Endothelial cell of umbilical vein (primary cell): ENCODE measurements at regions of chr12 and their contacts with region 1.

Region 1: GRCh38 chr12:79373896-79374499 is 316.8 kb downstream of the PAWR start:
- DNase-seq: peak; percentile 58
- H3K4me3 ChIP-seq: no peak overlapping the region
- H3K27ac ChIP-seq: no peak overlapping the region
- H3K4me1 ChIP-seq: peaks cover 4% of the 10 kb centered on the region
- H3K27me3 ChIP-seq: no peaks in the 10 kb centered on the region
- CTCF ChIP-seq: peak; percentile 84 to 87
- POLR2A ChIP-seq: no peak

Region 2: DNA sequence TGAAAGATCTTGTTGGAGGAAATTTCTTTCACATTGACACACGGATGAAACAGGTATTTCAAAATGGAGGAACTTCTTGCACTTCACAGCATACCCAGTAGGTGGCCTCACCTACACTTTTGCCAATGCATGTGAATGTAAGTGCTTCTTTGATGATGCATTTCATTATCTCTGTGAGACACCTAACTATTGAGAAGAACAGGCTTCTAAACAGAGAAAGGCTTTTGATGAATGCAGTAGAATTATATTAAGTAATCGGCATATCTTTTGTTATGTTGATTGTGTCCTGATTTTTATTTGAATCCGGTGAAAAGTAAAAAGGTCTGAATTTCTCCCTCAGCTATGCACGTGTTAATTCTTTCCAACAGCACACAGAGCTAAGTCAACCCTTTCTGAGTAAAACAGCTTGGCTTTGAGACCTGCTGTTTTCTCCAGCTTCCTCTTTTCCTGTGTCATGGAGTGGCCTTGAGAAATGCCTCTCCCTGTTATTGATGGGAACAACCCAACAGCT is 1144.4 kb before region 1 on chr12:
- CTCF ChIA-PET with region 1: interaction called, 3 read pairs
- POLR2A ChIA-PET with region 1: no interaction called
- dilution Hi-C with region 1: no loop called
- intact Hi-C with region 1: loop called (anchors 2 kb)
- DNase-seq: peak; percentile 47
- H3K4me3 ChIP-seq: no peak overlapping the region
- H3K27ac ChIP-seq: no peak overlapping the region
- H3K4me1 ChIP-seq: no peaks in the 10 kb centered on the region
- H3K27me3 ChIP-seq: no peaks in the 10 kb centered on the region
- CTCF ChIP-seq: peak; percentile 56 to 67
- POLR2A ChIP-seq: no peak

Region 3: GRCh38 chr12:78470354-78471195 is 903.4 kb before region 1 on chr12:
- CTCF ChIA-PET with region 1: interaction called, 57 read pairs
- POLR2A ChIA-PET with region 1: no interaction called
- dilution Hi-C with region 1: no loop called
- intact Hi-C with region 1: loop called (anchors 1 kb)
- DNase-seq: peak; percentile 57
- H3K4me3 ChIP-seq: no peak overlapping the region
- H3K27ac ChIP-seq: no peak overlapping the region
- H3K4me1 ChIP-seq: no peaks in the 10 kb centered on the region
- H3K27me3 ChIP-seq: peaks cover 0 to 10% of the 10 kb centered on the region in 2 experiments
- CTCF ChIP-seq: peak; percentile 47 to 72
- POLR2A ChIP-seq: no peak

Region 4: DNA sequence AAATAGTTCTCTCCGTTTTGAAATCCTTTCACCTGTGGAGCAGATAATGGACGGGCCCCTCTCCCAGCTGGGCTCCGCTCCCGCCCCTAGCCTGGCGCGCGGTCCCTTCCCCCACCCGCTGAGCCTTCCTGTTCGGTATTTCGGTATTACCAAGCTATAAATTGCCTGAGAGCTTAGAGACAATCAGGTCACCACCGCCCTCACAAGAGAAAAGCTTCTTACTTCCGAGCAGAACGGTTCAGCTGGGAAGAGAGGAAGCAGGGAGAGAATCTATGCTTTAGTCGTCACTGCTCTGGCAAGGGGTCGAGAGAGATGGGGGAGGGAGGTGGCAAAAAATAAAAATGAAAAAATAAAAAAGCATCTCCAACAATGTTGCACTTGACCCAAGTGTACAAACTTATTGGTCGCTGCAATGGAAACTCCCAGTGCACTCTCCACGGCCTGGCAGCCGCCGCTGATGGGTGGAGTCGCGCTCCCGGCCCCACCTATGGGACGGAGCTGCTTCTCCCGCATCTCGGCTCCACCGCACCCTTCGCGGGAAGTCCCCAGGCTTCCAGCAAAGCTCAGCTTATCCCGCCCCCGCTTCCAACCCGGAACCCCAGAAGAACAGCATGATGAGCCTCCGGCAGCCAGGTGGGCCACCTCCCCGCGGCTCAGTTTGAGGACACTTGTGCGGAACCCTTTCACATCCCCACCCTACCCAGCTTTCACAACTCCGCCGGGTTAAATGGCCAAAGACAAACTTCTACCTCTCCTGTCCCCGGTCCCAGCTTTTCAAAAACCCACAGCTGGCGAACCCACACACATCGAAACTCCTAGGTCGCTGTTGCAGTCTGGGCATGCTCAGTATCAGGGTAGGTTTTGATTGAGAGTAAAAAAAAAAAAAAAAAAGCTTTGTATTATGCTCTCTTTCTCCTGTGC is 510.3 kb before region 1 on chr12:
- CTCF ChIA-PET with region 1: interaction called, 4 read pairs
- POLR2A ChIA-PET with region 1: no interaction called
- dilution Hi-C with region 1: no loop called
- intact Hi-C with region 1: loop called (anchors 10 kb)
- DNase-seq: peak; percentile 66
- H3K4me3 ChIP-seq: peak overlapping the region; percentile 45 to 91 (median 88)
- H3K27ac ChIP-seq: peak overlapping the region; percentile 69
- H3K4me1 ChIP-seq: peaks cover 9% of the 10 kb centered on the region
- H3K27me3 ChIP-seq: peaks cover 6 to 9% of the 10 kb centered on the region in 2 experiments
- CTCF ChIP-seq: no peak
- POLR2A ChIP-seq: no peak

Region 5: GRCh38 chr12:78888568-78888967 is 485.4 kb before region 1 on chr12:
- CTCF ChIA-PET with region 1: no interaction called
- POLR2A ChIA-PET with region 1: no interaction called
- dilution Hi-C with region 1: no loop called
- intact Hi-C with region 1: no loop called
- DNase-seq: no peak
- H3K4me3 ChIP-seq: no peak overlapping the region
- H3K27ac ChIP-seq: peak overlapping the region; percentile 11
- H3K4me1 ChIP-seq: peaks cover 29% of the 10 kb centered on the region
- H3K27me3 ChIP-seq: no peaks in the 10 kb centered on the region
- CTCF ChIP-seq: no peak
- POLR2A ChIP-seq: no peak

Region 6: DNA sequence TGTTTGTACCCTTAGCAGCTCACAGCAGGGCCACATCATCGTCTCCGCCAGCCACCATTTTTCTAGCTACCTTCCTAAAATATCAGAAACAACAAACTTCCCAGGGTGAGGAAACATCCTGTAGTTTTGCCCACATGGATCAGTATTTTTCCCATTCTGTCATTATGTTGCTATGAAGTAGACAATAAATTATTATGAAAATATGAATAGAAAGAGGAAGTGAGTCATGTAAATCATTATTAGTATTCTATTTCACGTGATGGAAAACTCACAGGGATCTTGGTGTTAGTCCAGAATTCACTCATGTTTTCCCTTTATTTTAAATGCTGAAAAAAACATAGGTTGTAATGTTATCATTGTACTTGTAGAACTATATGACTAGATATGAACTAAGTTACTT is 190.1 kb before region 1 on chr12:
- CTCF ChIA-PET with region 1: interaction called, 3 read pairs
- POLR2A ChIA-PET with region 1: no interaction called
- dilution Hi-C with region 1: no loop called
- intact Hi-C with region 1: loop called (anchors 5 kb)
- DNase-seq: peak; percentile 98
- H3K4me3 ChIP-seq: no peak overlapping the region
- H3K27ac ChIP-seq: peak overlapping the region; percentile 99
- H3K4me1 ChIP-seq: peaks cover 19% of the 10 kb centered on the region
- H3K27me3 ChIP-seq: no peaks in the 10 kb centered on the region
- CTCF ChIP-seq: no peak
- POLR2A ChIP-seq: no peak